ENCODE measurements at regions of chr7 and their contacts with region 1.

Region 1: GRCh38 chr7:142782922-142783900 is 12.4 kb downstream of the PRSS2 start:
- DNase-seq: peak; percentile 88
- ATAC-seq: peak; percentile 49
- H3K4me3 Mint-ChIP-seq: peak overlapping the region; percentile 63
- H3K27ac Mint-ChIP-seq: peak overlapping the region; percentile 89
- H3K4me1 Mint-ChIP-seq: peaks cover 41% of the 10 kb centered on the region
- H3K27me3 Mint-ChIP-seq: no peaks in the 10 kb centered on the region

Region 2: GRCh38 chr7:142632291-142633134 is 150.7 kb before region 1 on chr7:
- CTCF ChIA-PET with region 1: interaction called, 89 read pairs
- POLR2A ChIA-PET with region 1: interaction called, 8 read pairs
- DNase-seq: peak; percentile 71
- ATAC-seq: peak; percentile 81
- H3K4me3 Mint-ChIP-seq: no peak overlapping the region
- H3K27ac Mint-ChIP-seq: no peak overlapping the region
- H3K4me1 Mint-ChIP-seq: peaks cover 18% of the 10 kb centered on the region
- H3K27me3 Mint-ChIP-seq: peaks cover 13% of the 10 kb centered on the region

Region 3: DNA sequence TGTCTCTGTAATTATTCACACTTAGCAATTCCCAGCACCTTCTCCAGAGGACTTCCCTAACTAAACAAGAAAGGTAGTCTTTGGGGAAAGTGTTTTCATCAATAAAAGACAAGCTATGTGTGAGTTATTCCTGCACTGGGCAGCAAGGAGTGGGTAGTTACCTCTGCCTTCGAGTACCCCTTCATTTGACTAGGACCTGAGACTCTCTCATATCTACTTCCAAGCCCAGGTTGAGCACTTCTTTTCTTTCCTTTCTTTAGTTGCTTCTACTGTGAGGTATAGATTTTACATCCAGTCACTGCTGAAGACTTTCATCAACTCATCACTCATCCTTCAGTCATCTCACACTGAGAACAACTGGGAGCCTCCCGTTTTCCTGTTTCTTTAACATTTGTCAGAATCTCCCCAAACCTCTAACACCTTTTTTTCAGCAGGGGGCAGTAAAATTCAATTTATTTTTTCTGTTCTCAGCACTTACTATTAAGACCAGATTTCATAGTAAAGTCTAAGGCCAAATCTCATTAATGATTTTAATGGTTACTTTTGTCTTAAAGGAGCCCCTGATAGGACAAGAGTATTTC is 114.0 kb before region 1 on chr7:
- CTCF ChIA-PET with region 1: interaction called, 115 read pairs
- POLR2A ChIA-PET with region 1: interaction called, 4 read pairs
- DNase-seq: no peak
- ATAC-seq: no peak
- H3K4me3 Mint-ChIP-seq: no peak overlapping the region
- H3K27ac Mint-ChIP-seq: peak overlapping the region; percentile 74
- H3K4me1 Mint-ChIP-seq: peaks cover 34% of the 10 kb centered on the region
- H3K27me3 Mint-ChIP-seq: no peaks in the 10 kb centered on the region

Region 4: GRCh38 chr7:142711746-142712619 is 71.2 kb before region 1 on chr7:
- CTCF ChIA-PET with region 1: interaction called, 51 read pairs
- POLR2A ChIA-PET with region 1: interaction called, 20 read pairs
- DNase-seq: peak; percentile 70
- ATAC-seq: peak; percentile 83
- H3K4me3 Mint-ChIP-seq: peak overlapping the region; percentile 74
- H3K27ac Mint-ChIP-seq: peak overlapping the region; percentile 95
- H3K4me1 Mint-ChIP-seq: peaks cover 84% of the 10 kb centered on the region
- H3K27me3 Mint-ChIP-seq: no peaks in the 10 kb centered on the region

Region 5: GRCh38 chr7:142796608-142797385 is 13.6 kb after region 1 on chr7:
- CTCF ChIA-PET with region 1: interaction called, 77 read pairs
- POLR2A ChIA-PET with region 1: interaction called, 2,065 read pairs
- DNase-seq: peak; percentile 35
- ATAC-seq: peak; percentile 11
- H3K4me3 Mint-ChIP-seq: peak overlapping the region; percentile 90
- H3K27ac Mint-ChIP-seq: peak overlapping the region; percentile 99
- H3K4me1 Mint-ChIP-seq: peaks cover 70% of the 10 kb centered on the region
- H3K27me3 Mint-ChIP-seq: no peaks in the 10 kb centered on the region

Region 6: GRCh38 chr7:142833174-142834048 is 50.2 kb after region 1 on chr7:
- CTCF ChIA-PET with region 1: interaction called, 14 read pairs
- POLR2A ChIA-PET with region 1: no interaction called
- DNase-seq: no peak
- ATAC-seq: no peak
- H3K4me3 Mint-ChIP-seq: no peak overlapping the region
- H3K27ac Mint-ChIP-seq: no peak overlapping the region
- H3K4me1 Mint-ChIP-seq: peaks cover 13% of the 10 kb centered on the region
- H3K27me3 Mint-ChIP-seq: peaks cover 7% of the 10 kb centered on the region